ENCODE measurements at regions of chr3 and their contacts with region 1.

Region 1: GRCh38 chr3:26068890-26069289 is 279.0 kb downstream of the OXSM start:
- DNase-seq: peak; percentile 48
- ATAC-seq: peak; percentile 92

Region 2: GRCh38 chr3:26099692-26100091 is 30.8 kb after region 1 on chr3:
- intact Hi-C with region 1: loop called (anchors 1 kb)
- DNase-seq: no peak
- ATAC-seq: peak; percentile 77